AG04449 (cell line): ENCODE measurements at regions of chr3 and their contacts with region 1.

Region 1: DNA sequence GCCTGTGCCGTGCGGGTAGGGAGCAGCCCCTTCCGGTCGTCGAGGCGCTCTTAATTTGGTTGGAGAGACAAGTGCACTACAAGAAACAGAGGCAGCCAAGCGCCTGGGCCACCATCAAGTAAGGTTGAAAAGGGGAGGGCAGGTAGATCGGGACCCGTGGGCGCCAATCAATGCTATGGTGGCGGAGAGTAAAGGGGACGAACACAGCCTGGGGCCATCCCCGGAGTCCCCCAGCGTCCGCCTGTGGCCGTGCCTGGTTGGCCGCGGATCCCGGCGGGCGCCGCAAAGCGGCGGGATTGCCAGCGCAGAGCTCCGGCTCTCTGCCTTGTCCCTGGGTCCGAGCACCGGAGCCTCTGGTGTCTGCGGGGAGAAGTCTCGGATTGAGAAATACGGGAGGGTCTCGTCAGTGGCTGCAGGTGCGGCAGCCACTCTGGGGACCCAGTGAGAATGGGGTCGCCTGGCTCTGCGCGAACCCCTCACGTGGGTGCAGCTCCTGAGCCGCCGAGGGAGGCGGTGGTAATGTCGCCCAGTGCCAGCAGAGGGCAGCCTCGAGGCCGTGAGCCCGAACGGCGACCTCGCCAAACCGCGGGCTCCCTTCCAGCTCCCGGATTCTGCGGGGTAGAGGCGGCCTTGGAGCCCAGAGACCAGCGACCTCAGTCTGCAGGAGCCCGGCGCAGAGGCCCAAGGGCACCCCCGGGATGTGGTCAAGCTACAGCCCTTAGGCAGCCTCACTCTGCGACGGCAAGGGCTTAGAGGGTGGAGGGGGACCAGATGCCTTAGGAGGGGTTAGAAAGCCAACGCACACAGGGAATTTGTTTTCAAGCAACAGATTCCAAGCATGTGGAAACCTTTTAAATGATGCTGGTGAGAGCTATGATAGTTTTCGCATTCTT is 10.8 kb downstream of the FOXL2 start:
- DNase-seq: no peak
- H3K4me3 ChIP-seq: peak overlapping the region; percentile 60
- CTCF ChIP-seq: peak; percentile 98

Region 2: DNA sequence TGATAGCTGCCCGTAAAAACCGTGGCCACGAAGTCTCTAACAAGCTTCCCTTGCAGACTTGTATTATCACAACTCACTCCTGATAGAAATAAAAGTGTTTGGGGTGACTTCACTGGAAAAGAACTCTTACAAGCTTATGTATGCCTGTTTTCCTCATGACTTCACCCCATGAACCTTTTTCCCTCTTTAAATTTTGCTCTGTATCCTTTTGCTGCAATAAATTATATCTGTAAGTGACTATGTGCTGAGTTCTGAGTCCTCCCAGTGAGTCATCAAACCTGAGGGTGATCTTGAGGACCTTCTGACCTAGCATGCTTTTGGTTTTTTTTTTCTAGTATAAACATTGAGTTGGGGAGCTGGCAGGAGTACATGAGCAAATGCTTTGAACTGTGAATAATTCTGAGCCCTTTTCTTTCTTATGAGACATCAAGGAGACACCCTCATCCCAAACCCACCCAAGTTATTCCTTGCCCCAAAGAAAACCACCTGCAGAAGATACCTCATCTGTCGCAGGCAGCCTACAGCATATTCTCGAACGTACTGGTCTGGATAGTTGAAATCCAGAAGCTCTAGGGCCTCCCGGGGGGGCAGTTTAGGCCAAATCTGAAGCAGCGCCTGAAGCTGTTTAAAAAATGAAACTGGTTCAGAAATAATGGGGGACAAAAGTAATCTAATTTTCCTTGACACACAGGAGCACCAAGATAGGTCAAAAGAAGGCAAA is 241.6 kb before region 1 on chr3:
- CTCF ChIA-PET with region 1: interaction called, 14 read pairs
- POLR2A ChIA-PET with region 1: no interaction called
- DNase-seq: peak; percentile 95
- H3K4me3 ChIP-seq: no peak overlapping the region
- CTCF ChIP-seq: no peak

Region 3: GRCh38 chr3:138946181-138947059 is 10.3 kb after region 1 on chr3:
- CTCF ChIA-PET with region 1: interaction called, 42 read pairs
- POLR2A ChIA-PET with region 1: interaction called, 9 read pairs
- DNase-seq: no peak
- H3K4me3 ChIP-seq: peak overlapping the region; percentile 64
- CTCF ChIP-seq: peak; percentile 51

Region 4: GRCh38 chr3:138974462-138974861 is 38.4 kb after region 1 on chr3:
- CTCF ChIA-PET with region 1: interaction called, 35 read pairs
- POLR2A ChIA-PET with region 1: no interaction called
- DNase-seq: no peak
- H3K4me3 ChIP-seq: no peak overlapping the region
- CTCF ChIP-seq: no peak

Region 5: GRCh38 chr3:138984816-138985215 is 48.7 kb after region 1 on chr3:
- CTCF ChIA-PET with region 1: interaction called, 35 read pairs
- POLR2A ChIA-PET with region 1: no interaction called
- DNase-seq: no peak
- H3K4me3 ChIP-seq: no peak overlapping the region
- CTCF ChIP-seq: no peak

Region 6: DNA sequence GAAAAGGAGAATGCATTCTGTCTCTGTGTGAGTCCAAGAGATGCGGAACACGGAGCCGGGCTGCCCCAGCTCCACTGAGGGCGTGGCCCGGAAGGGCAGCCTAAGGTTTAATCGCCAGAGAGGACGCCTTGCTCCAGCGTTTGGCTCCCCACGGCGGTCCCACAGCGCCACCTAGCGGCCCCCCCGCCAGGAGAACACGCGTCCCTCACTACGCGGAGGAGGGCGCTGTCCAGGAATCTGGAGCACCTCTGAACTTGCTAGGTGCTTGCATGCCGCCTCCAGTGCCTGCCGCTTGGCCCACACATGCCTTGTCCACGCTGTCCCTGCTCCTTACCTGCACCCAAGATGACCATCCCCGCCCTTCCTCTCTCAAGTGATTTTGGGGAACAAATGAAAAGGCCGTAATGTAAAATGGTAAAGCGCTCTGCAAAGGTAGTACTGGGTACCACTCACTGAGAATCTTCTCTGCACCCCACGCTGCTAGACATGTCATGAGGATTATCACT is 393.3 kb after region 1 on chr3:
- CTCF ChIA-PET with region 1: interaction called, 22 read pairs
- POLR2A ChIA-PET with region 1: no interaction called
- DNase-seq: no peak
- H3K4me3 ChIP-seq: peak overlapping the region; percentile 36
- CTCF ChIP-seq: peak; percentile 100